T-cell (primary cell): ENCODE measurements at regions of chr12 and their contacts with region 1.

Region 1: DNA sequence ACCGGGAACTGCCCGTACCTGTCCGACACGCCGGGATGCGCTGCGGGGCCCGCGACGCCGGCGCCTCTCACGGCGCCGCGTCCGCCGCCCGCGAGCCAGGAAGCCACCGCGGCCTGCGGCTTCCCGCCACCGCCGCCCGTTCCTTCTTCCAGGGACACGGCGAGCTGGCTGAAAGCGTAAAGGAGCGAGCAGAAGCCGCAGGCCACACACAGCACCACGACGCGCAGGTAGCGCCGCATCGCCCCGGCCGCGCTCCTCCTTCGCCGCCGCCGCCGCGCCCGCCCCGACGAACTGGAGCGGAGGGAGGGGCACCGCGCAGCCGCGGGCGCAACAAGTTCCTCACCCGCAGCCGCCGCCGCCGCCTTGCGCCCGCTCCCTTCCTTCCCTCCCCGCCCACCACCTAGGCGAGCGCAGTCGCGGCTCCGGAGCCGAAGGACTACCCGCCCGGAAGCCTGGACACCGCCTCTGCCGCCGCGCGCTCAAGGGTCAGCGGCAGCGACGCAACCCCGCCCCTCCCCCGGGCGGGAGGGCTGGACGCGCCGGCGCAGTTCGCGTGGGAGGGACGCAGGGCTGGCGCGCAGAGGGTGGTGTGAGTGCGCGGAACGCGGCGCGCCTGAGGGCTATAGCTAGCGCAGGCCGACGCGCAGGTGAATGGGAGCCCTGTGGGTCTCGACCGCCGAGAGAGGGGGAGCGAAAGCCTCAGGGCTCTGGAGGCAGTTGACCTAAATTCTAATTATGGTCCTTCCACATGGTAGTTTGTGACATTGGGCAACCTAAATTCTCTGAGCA is at the start of gene GXYLT1:
- DNase-seq: peak; percentile 46 to 82 (median 64)
- ATAC-seq: peak; percentile 87 to 91 (median 89)
- H3K4me3 ChIP-seq: peak within 1 kb of the TSS; percentile 67 to 83
- H3K4me3 Mint-ChIP-seq: peak within 1 kb of the TSS; percentile 83 to 98 (median 95)
- H3K27ac ChIP-seq: peak within 1 kb of the TSS; percentile 36
- H3K27ac Mint-ChIP-seq: peak within 1 kb of the TSS; percentile 84 to 92
- H3K4me1 ChIP-seq: peaks cover 6 to 20% of the 10 kb centered on the region in 2 experiments
- H3K4me1 Mint-ChIP-seq: peaks cover 43 to 51% (median 49%) of the 10 kb centered on the region in 3 donors
- H3K27me3 ChIP-seq: no peaks in the 10 kb centered on the region
- H3K27me3 Mint-ChIP-seq: no peaks in the 10 kb centered on the region
- total RNA-seq, gene GXYLT1: 6.3 to 9.3 (median 7.1) TPM

Region 2: GRCh38 chr12:41645624-41646023 is 499.0 kb before region 1 on chr12:
- CTCF ChIA-PET with region 1: no interaction called
- POLR2A ChIA-PET with region 1: no interaction called
- DNase-seq: no peak
- ATAC-seq: no peak
- H3K4me3 ChIP-seq: no peak overlapping the region
- H3K4me3 Mint-ChIP-seq: no peak overlapping the region
- H3K27ac ChIP-seq: no peak overlapping the region
- H3K27ac Mint-ChIP-seq: no peak overlapping the region
- H3K4me1 ChIP-seq: no peaks in the 10 kb centered on the region
- H3K4me1 Mint-ChIP-seq: no peaks in the 10 kb centered on the region
- H3K27me3 ChIP-seq: no peaks in the 10 kb centered on the region
- H3K27me3 Mint-ChIP-seq: no peaks in the 10 kb centered on the region

Region 3: DNA sequence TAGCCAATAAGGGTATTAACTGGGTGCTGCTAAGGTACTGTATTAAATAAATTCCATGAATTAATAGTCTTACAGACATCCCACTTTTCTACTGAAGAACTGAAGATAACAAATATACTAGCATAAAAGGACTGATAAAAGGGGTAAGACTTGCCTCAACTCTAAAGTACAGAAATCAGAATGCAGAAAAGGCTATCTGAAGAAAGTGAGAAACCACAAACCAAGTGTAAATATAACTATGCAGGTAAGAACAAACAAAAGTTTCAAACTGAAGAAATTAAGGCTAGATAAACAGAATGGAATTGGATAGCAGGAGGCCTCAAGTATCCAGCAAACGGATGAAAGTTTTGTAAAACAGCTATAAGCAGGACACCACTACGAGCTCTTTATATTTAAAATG is 64.0 kb after region 1 on chr12:
- CTCF ChIA-PET with region 1: no interaction called
- POLR2A ChIA-PET with region 1: no interaction called
- DNase-seq: no peak
- ATAC-seq: no peak
- H3K4me3 ChIP-seq: no peak overlapping the region
- H3K4me3 Mint-ChIP-seq: no peak overlapping the region
- H3K27ac ChIP-seq: no peak overlapping the region
- H3K27ac Mint-ChIP-seq: no peak overlapping the region
- H3K4me1 ChIP-seq: no peaks in the 10 kb centered on the region
- H3K4me1 Mint-ChIP-seq: peaks cover 8 to 14% (median 10%) of the 10 kb centered on the region in 3 donors
- H3K27me3 ChIP-seq: no peaks in the 10 kb centered on the region
- H3K27me3 Mint-ChIP-seq: no peaks in the 10 kb centered on the region

Region 4: GRCh38 chr12:42343721-42344120 is 199.1 kb after region 1 on chr12:
- CTCF ChIA-PET with region 1: interaction called in 1 of 2 experiments, 10 read pairs
- POLR2A ChIA-PET with region 1: no interaction called
- DNase-seq: no peak
- ATAC-seq: no peak
- H3K4me3 ChIP-seq: no peak overlapping the region
- H3K4me3 Mint-ChIP-seq: no peak overlapping the region
- H3K27ac ChIP-seq: no peak overlapping the region
- H3K27ac Mint-ChIP-seq: no peak overlapping the region
- H3K4me1 ChIP-seq: peaks cover 3% of the 10 kb centered on the region in 2 experiments
- H3K4me1 Mint-ChIP-seq: peaks cover 38 to 54% (median 53%) of the 10 kb centered on the region in 3 donors
- H3K27me3 ChIP-seq: no peaks in the 10 kb centered on the region
- H3K27me3 Mint-ChIP-seq: no peaks in the 10 kb centered on the region